Activated naive CD4-positive, alpha-beta T cell treated with anti-CD3 and anti-CD28 coated beads for 36 hours (primary cell): ENCODE measurements at regions of chr18 and their contacts with region 1.

Region 1: DNA sequence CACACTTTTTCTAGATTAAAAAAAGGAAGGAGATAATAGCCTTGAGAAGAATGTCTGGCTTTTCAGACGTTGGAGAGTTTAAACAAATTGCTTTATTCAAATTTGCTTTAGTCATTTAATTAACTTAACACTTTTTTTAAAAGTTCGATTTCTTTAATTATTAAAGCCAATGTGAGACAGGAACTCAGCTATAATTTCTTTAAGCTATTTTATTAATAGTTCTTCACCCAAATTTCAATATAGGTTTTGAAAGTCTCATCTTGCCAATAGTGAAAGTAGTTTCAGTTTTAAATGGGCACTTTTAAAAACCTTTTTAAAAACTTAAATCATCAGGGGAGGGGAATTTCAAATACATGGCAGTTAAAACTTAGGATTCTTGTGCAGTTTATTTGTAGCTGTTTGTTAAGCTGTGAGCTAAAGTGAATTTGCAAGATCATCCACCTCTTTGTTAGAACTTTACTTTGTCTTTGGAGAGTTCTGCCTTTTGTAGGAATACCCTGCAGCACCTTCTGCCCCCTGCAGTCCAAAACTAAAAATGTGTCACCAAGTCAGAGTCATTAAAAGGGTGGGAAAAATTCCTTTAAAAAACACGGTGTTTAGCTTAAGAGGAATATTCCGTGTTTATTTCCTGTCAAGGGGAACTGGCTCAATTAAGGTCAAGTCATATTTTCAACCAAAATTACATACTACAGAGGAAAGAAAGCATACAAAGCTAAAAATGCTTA is 4.6 kb downstream of the TGIF1 start:
- DNase-seq: peak; percentile 31
- H3K4me3 Mint-ChIP-seq: peak overlapping the region; percentile 89
- H3K27ac Mint-ChIP-seq: peak overlapping the region; percentile 99
- H3K4me1 Mint-ChIP-seq: peaks cover 63% of the 10 kb centered on the region
- H3K27me3 Mint-ChIP-seq: no peaks in the 10 kb centered on the region

Region 2: GRCh38 chr18:2932247-2933181 is 522.0 kb before region 1 on chr18:
- CTCF ChIA-PET with region 1: no interaction called
- intact Hi-C with region 1: no loop called
- DNase-seq: peak; percentile 68
- H3K4me3 Mint-ChIP-seq: no peak overlapping the region
- H3K27ac Mint-ChIP-seq: peak overlapping the region; percentile 94
- H3K4me1 Mint-ChIP-seq: peaks cover 35% of the 10 kb centered on the region
- H3K27me3 Mint-ChIP-seq: no peaks in the 10 kb centered on the region

Region 3: DNA sequence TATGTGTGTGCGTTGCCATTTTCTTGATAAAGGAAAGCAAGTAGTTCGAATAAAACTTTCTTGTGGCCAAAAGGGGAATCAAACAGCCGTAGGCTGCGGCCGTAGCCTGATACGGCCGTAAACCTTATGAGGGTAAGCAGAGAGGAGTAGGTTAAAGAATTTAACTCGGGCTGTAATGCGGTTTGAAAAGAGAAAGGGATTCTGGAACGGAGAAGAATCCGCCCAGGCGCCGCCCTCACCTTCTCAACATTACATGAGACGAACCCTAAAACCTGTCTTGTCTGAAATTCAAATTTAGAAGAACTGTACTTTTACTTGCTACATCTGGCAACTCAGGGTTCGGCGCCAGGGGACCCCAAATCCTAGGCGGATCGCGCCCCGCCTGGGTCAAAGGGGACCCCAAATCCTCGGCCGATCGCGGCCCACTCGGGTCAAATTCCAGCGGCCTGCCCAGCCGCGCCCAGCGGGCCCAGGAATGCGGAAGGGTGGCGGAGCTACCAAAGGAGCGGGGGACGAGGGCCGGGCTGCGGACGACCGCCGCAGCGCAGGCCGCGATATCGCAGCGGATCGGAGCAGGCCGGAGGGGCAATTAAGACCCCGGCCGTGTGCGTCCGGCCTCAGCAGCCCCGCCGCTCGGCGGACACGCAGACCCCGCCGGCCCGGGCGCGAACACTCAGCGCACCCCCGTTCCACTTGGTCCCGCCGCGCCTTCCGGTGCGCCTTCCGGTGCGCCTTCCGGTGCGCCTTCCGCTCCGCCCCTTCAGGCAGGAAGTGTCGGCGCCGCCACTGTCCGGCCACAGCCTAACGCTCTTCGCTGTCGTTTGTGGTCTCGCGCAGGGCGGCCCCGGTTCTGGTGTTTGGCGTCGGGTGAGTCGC is 192.9 kb before region 1 on chr18 and contains the start of gene MYL12B:
- CTCF ChIA-PET with region 1: interaction called, 3 read pairs
- intact Hi-C with region 1: loop called (anchors 1 kb)
- DNase-seq: peak; percentile 79
- H3K4me3 Mint-ChIP-seq: peak within 1 kb of the TSS; percentile 92
- H3K27ac Mint-ChIP-seq: peak within 1 kb of the TSS; percentile 97
- H3K4me1 Mint-ChIP-seq: peaks cover 64% of the 10 kb centered on the region
- H3K27me3 Mint-ChIP-seq: no peaks in the 10 kb centered on the region
- total RNA-seq, gene MYL12B: 288 to 293 TPM

Region 4: GRCh38 chr18:3305354-3305762 is 149.2 kb before region 1 on chr18:
- CTCF ChIA-PET with region 1: no interaction called
- intact Hi-C with region 1: loop called (anchors 1 kb)
- DNase-seq: peak; percentile 66
- H3K4me3 Mint-ChIP-seq: no peak overlapping the region
- H3K27ac Mint-ChIP-seq: peak overlapping the region; percentile 37
- H3K4me1 Mint-ChIP-seq: peaks cover 14% of the 10 kb centered on the region
- H3K27me3 Mint-ChIP-seq: peaks cover 16% of the 10 kb centered on the region

Region 5: DNA sequence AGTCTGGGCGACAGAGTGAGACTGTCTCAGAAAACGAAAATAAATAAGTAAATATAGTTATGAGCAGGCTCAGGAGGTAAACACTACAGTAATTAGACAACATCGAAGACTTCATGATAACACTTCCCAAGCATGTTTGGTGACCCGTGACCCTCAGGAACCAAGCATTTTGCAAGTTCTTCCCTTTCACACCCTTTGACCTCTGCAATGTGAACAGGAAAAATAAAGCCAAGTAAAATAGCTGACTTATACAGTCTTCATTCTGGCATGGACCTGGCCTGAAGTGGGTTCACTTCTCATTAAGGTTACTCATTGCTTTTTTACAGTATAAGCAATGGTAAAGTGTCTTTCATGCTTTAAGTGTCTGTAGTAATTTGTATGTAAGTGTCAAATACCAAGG is 19.8 kb before region 1 on chr18:
- CTCF ChIA-PET with region 1: no interaction called
- intact Hi-C with region 1: no loop called
- DNase-seq: no peak
- H3K4me3 Mint-ChIP-seq: no peak overlapping the region
- H3K27ac Mint-ChIP-seq: no peak overlapping the region
- H3K4me1 Mint-ChIP-seq: no peaks in the 10 kb centered on the region
- H3K27me3 Mint-ChIP-seq: no peaks in the 10 kb centered on the region

Region 6: GRCh38 chr18:3466045-3466444 is 11.5 kb after region 1 on chr18:
- CTCF ChIA-PET with region 1: interaction called, 10 read pairs
- intact Hi-C with region 1: no loop called
- DNase-seq: no peak
- H3K4me3 Mint-ChIP-seq: no peak overlapping the region
- H3K27ac Mint-ChIP-seq: no peak overlapping the region
- H3K4me1 Mint-ChIP-seq: peaks cover 29% of the 10 kb centered on the region
- H3K27me3 Mint-ChIP-seq: no peaks in the 10 kb centered on the region

Region 7: GRCh38 chr18:3541549-3542386 is 87.2 kb after region 1 on chr18:
- CTCF ChIA-PET with region 1: interaction called, 3 read pairs
- intact Hi-C with region 1: loop called (anchors 1 kb)
- DNase-seq: peak; percentile 71
- H3K4me3 Mint-ChIP-seq: peak overlapping the region; percentile 0
- H3K27ac Mint-ChIP-seq: peak overlapping the region; percentile 66
- H3K4me1 Mint-ChIP-seq: peaks cover 24% of the 10 kb centered on the region
- H3K27me3 Mint-ChIP-seq: peaks cover 8% of the 10 kb centered on the region